Mammary epithelial cell (primary cell): ENCODE measurements at regions of chr2 and their contacts with region 1.

Region 1: DNA sequence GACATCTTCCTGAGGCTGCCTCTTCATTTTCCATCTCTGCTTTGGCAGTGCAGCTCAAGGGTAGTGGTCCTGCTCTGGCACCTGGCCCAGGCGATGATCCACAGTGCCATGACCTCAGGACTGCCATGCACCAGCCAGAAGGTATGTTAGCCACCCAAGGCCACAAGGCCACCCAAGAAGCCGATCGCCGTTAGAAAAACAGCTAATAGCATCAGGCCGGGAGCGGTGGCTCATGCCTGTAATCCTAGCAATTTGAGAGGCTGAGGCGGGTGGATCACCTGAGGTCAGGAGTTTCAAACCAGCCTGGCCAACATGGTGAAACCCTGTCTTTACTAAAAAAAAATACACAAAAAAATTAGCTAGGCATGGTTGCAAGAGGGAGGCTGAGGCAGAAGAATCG is 28.4 kb upstream of the UGGT1 start:
- DNase-seq: no peak
- H3K4me3 ChIP-seq: no peak overlapping the region
- H3K27ac ChIP-seq: no peak overlapping the region
- H3K4me1 ChIP-seq: no peaks in the 10 kb centered on the region
- H3K27me3 ChIP-seq: no peaks in the 10 kb centered on the region
- CTCF ChIP-seq: no peak

Region 2: DNA sequence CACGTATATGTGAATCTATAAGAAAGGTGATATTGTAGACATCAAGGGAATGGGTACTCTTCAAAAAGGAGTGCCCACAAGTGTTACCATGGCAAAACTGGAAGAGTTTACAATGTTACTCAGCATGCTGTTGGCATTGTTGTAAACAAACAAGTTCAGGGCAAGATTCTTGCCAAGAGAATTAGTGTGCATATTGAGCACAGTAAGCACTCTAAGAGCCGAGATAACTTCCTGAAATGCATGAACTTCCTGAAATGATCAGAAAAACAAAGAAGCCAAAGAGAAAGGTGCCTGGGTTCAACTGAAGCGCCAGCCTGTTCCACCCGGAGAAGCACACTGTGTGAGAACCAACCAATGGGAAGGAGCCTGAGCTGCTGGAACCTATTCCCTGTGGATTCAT is 155.1 kb after region 1 on chr2:
- CTCF ChIA-PET with region 1: no interaction called
- dilution Hi-C with region 1: no loop called
- in situ Hi-C with region 1: no loop called
- intact Hi-C with region 1: no loop called
- DNase-seq: no peak
- H3K4me3 ChIP-seq: no peak overlapping the region
- H3K27ac ChIP-seq: no peak overlapping the region
- H3K4me1 ChIP-seq: no peaks in the 10 kb centered on the region
- H3K27me3 ChIP-seq: no peaks in the 10 kb centered on the region
- CTCF ChIP-seq: no peak

Region 3: DNA sequence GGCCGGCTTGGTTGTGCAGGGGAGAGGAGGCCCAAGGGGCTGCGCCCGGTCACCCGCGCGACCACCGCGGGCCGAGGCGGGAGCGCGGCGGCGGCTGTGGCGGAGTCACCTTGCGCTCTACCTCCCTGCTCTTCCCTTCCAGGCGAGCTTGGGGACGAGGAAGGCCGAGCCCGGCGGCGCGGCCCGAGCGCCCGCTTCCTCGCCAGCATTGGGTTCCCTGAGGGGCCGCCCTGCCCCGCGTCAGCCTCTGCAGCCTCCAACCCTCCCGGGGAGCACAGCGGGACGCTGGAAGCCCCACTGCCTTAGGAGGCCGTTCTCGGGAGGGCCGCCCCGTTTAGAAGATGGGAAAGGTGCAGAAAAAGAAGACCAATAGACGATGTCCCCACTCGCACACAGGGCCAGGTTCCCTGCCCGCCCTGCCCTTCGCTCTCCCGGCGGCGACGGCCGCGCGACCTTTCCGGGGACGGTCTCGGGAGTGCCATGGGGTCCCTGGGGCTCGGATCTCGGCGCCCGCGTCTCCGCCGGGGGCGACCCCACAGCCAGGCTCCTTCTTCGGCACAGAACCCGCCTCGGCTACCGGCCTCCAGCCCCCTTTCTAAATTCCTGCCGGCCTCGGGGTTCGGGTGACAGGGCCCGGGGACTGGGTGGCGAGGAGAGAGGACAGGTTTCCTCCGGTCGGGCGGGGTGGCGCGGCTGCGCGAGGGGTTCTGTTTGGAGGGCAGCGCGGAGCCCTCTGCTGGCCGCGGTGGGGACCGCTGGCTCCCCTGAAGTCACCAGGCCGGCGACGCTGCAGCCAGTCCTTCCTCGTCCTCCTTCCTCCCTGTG is 170.6 kb after region 1 on chr2:
- CTCF ChIA-PET with region 1: interaction called, 6 read pairs
- dilution Hi-C with region 1: no loop called
- in situ Hi-C with region 1: no loop called
- intact Hi-C with region 1: loop called (anchors 1 kb)
- DNase-seq: peak; percentile 51
- H3K4me3 ChIP-seq: peak overlapping the region; percentile 60 to 86 (median 76)
- H3K27ac ChIP-seq: no peak overlapping the region
- H3K4me1 ChIP-seq: peaks cover 14% of the 10 kb centered on the region
- H3K27me3 ChIP-seq: no peaks in the 10 kb centered on the region
- CTCF ChIP-seq: peak; percentile 69 to 94

Region 4: GRCh38 chr2:128300151-128301020 is 237.8 kb after region 1 on chr2:
- CTCF ChIA-PET with region 1: no interaction called
- dilution Hi-C with region 1: no loop called
- in situ Hi-C with region 1: no loop called
- intact Hi-C with region 1: no loop called
- DNase-seq: no peak
- H3K4me3 ChIP-seq: no peak overlapping the region
- H3K27ac ChIP-seq: no peak overlapping the region
- H3K4me1 ChIP-seq: peaks cover 40% of the 10 kb centered on the region
- H3K27me3 ChIP-seq: no peaks in the 10 kb centered on the region
- CTCF ChIP-seq: no peak

Region 5: GRCh38 chr2:129923265-129924091 is 1860.9 kb after region 1 on chr2:
- CTCF ChIA-PET with region 1: no interaction called
- dilution Hi-C with region 1: no loop called
- in situ Hi-C with region 1: no loop called
- intact Hi-C with region 1: loop called (anchors 2 kb)
- DNase-seq: peak; percentile 25
- H3K4me3 ChIP-seq: no peak overlapping the region
- H3K27ac ChIP-seq: no peak overlapping the region
- H3K4me1 ChIP-seq: no peaks in the 10 kb centered on the region
- H3K27me3 ChIP-seq: peaks cover 6% of the 10 kb centered on the region
- CTCF ChIP-seq: peak; percentile 53 to 56